BJ (cell line): ENCODE measurements at regions of chr12 and their contacts with region 1.

Region 1: DNA sequence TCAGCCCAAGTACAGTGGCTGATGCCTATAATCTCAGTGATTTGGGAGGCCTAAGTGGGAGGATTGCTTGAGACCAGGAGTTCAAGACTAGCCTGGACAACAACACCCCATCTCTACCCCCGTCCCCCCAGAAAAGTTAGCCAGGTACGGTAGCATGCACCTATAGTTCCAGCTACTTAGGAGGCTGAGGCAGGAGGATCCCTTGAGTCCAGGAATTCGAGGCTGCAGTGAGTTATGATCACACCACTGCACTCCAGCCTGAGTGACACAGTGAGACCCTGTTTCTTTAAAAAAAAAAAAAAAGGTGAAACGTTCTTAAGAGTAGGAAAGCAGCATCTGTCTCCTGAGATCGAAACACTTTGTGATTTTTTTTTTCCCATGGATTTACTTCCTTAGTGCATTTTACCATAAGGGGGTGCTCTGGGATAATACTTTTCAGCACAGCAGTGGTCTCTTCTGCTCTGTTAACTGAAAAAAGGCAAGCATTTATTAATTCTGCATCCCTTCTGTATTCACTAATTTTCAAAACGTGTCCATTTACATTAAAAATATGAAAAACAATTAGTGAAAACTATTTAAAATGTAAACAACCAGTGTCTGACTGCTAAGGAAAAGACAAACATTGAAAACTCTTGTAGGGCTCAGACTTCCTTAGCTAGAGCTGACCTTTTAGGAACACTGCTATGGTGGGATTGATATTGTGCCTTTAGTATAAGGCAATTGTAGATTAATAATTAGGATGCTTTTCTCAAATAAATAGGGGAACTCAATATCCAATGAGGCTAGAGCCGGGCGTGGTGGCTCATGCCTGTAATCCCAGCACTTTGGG is 31.2 kb upstream of the USP44 start:
- DNase-seq: no peak
- H3K4me3 ChIP-seq: no peak overlapping the region
- H3K27me3 ChIP-seq: no peaks in the 10 kb centered on the region
- CTCF ChIP-seq: peak; percentile 54

Region 2: GRCh38 chr12:95544756-95545155 is 37.7 kb before region 1 on chr12:
- CTCF ChIA-PET with region 1: no interaction called
- POLR2A ChIA-PET with region 1: no interaction called
- DNase-seq: no peak
- H3K4me3 ChIP-seq: no peak overlapping the region
- H3K27me3 ChIP-seq: peaks cover 8% of the 10 kb centered on the region
- CTCF ChIP-seq: no peak

Region 3: GRCh38 chr12:95593266-95593871 is 10.9 kb after region 1 on chr12:
- CTCF ChIA-PET with region 1: interaction called, 13 read pairs
- POLR2A ChIA-PET with region 1: no interaction called
- DNase-seq: no peak
- H3K4me3 ChIP-seq: no peak overlapping the region
- H3K27me3 ChIP-seq: no peaks in the 10 kb centered on the region; the same call in 1 of the 2 replicates
- CTCF ChIP-seq: no peak

Region 4: DNA sequence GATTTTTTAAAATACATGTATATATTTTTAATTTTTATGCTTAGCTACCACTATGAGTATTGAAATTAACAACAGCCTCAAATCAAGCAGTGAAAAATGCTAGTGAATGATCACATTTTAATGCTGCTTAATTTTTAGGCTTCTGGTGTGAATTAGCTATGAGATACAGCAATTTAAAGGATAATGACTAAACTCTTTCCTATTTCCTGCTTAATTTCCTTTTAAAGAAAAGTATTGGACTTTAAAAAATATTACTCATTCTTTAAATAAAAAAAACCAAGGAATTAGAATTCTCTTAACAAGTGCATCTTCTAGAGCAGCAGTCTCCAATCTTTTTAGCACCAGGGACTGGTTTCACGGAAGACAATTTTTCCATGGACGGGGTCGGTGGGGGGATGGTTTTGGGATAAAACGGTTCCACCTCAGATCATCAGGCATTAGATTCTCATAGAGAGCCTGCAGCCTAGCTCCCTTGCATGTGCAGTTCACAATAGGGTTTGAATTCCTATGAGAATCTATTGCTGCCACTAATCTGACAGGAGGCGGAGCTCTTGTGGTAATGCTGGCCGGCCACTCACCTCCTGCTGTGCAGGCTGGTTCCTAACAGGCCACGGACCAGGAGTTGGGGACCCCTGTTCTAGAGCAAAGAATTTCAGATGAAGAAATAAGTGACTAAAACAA is 226.7 kb after region 1 on chr12:
- CTCF ChIA-PET with region 1: interaction called, 123 read pairs
- POLR2A ChIA-PET with region 1: no interaction called
- DNase-seq: no peak
- H3K4me3 ChIP-seq: no peak overlapping the region
- H3K27me3 ChIP-seq: no peaks in the 10 kb centered on the region
- CTCF ChIP-seq: no peak

Region 5: DNA sequence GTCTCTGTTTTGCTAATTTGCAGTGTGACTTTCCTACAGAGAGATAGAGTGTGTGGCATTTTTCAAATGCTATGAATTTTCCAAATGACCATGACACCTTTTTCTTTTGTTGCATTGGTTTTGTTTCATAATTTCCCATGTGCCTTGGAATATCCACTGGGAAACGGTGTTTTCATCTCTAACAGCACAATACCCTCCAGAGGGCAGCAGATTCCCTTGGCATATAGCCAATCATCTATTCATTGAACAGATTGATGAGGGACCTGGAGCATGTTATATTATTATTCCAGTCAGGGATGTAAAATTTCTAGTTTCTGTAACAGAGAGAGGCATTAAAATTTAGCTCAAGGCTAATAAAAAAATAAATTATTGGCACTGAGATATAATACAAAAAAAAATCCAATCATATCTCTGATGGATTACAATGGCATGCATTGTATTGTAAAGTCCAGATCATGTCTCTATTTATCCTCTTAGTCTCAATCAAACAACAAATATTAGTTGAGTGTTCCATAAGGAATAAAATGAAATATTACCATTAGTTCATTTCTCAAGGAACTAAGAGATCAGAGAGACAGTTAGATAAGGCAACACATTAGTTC is 237.8 kb after region 1 on chr12:
- CTCF ChIA-PET with region 1: interaction called, 123 read pairs
- POLR2A ChIA-PET with region 1: no interaction called
- DNase-seq: no peak
- H3K4me3 ChIP-seq: no peak overlapping the region
- H3K27me3 ChIP-seq: peaks cover 4% of the 10 kb centered on the region; the same call in 1 of the 2 replicates
- CTCF ChIP-seq: peak; percentile 64

Region 6: GRCh38 chr12:96274331-96274730 is 691.9 kb after region 1 on chr12:
- CTCF ChIA-PET with region 1: no interaction called
- POLR2A ChIA-PET with region 1: no interaction called
- DNase-seq: peak; percentile 10
- H3K4me3 ChIP-seq: no peak overlapping the region
- H3K27me3 ChIP-seq: no peaks in the 10 kb centered on the region
- CTCF ChIP-seq: no peak